Keratinocyte (primary cell): ENCODE measurements at regions of chrX and their contacts with region 1.

Region 1: DNA sequence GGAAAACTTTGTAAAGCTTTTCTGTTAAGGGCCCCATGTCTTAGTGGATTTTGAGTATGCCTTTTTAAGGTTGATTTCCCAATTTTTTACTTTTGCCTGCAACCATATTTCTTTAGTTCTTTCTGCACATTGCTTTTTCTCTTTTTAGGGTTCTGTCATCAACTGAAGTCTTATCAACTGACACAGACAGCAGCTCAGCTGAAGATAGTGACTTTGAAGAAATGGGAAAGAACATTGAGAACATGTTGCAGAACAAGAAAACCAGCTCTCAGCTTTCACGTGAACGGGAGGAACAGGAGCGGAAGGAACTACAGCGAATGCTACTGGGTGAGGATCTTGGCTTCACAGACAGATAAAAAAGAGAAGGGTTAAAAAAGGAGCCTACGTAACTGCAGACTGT is 27.8 kb downstream of the TAF1 start:
- DNase-seq: no peak
- H3K4me3 ChIP-seq: no peak overlapping the region
- H3K27ac ChIP-seq: no peak overlapping the region
- H3K4me1 ChIP-seq: no peaks in the 10 kb centered on the region
- H3K27me3 ChIP-seq: no peaks in the 10 kb centered on the region
- CTCF ChIP-seq: no peak

Region 2: GRCh38 chrX:71227370-71228062 is 166.4 kb before region 1 on chrX:
- dilution Hi-C with region 1: no loop called
- DNase-seq: no peak
- H3K4me3 ChIP-seq: no peak overlapping the region
- H3K27ac ChIP-seq: no peak overlapping the region
- H3K4me1 ChIP-seq: no peaks in the 10 kb centered on the region
- H3K27me3 ChIP-seq: no peaks in the 10 kb centered on the region
- CTCF ChIP-seq: no peak

Region 3: DNA sequence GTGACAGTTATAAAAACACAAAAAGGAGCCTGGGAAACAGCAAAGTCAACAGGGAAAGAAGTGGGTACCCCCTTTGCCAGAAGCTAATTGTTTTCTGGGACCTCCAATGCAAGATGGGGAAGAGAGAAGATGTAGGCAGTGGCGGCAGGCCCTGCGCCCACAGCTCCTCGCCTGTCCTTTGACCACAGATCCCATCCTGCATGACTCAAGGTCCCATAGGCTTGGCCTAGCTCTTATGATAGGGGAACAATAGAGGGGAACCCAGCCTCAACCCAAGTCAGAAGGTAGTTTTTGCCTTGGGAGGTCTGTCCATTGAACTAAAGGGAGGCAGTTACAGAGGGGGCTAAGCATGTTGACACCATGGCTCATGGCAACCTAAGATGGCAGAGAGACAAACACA is 154.1 kb before region 1 on chrX:
- dilution Hi-C with region 1: loop called (anchors 10 kb)
- DNase-seq: no peak
- H3K4me3 ChIP-seq: no peak overlapping the region
- H3K27ac ChIP-seq: no peak overlapping the region
- H3K4me1 ChIP-seq: no peaks in the 10 kb centered on the region
- H3K27me3 ChIP-seq: no peaks in the 10 kb centered on the region
- CTCF ChIP-seq: no peak

Region 4: DNA sequence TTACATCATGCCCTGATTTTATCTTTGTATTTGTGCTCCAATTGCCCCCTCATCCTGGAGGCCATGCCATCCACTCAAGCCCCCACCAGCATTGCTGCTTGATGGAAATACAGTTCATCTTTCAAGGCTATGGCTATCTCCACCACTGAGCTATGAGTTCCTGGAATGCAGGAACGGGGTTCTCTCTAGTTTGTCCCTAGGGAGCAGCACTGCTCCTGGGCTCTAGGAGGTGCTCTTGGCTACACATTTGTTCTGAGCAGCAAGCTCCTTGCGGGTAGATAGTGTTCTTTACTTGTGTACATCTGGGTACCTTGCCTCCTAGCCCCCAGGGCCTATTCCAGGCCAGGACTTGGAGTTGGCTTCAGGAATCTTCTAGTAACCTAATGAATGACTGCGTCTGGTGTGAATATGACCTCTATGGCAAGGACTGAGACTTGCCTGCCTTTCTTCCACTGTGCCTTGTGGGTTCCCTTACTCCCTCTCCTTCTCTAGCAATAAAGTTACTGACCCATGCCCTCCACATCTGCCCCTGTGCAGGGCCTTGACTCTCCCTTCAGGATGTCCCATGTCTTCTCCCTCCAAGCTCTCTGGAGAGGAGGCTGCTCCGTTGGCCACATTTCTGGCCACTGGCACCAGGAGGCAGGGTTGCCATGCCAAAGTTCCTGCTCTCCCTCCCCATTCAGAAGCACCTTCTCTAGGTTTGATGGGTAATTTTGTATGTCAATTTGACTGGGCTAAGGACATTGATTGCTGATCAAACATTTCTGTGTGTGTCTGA is 904.2 kb after region 1 on chrX:
- dilution Hi-C with region 1: no loop called
- DNase-seq: no peak
- H3K4me3 ChIP-seq: no peak overlapping the region
- H3K27ac ChIP-seq: no peak overlapping the region
- H3K4me1 ChIP-seq: no peaks in the 10 kb centered on the region
- H3K27me3 ChIP-seq: peaks cover 67% of the 10 kb centered on the region
- CTCF ChIP-seq: peak in 2 of 3 experiments; percentile 55